ENCODE measurements at regions of chr2 and their contacts with region 1.

Region 1: DNA sequence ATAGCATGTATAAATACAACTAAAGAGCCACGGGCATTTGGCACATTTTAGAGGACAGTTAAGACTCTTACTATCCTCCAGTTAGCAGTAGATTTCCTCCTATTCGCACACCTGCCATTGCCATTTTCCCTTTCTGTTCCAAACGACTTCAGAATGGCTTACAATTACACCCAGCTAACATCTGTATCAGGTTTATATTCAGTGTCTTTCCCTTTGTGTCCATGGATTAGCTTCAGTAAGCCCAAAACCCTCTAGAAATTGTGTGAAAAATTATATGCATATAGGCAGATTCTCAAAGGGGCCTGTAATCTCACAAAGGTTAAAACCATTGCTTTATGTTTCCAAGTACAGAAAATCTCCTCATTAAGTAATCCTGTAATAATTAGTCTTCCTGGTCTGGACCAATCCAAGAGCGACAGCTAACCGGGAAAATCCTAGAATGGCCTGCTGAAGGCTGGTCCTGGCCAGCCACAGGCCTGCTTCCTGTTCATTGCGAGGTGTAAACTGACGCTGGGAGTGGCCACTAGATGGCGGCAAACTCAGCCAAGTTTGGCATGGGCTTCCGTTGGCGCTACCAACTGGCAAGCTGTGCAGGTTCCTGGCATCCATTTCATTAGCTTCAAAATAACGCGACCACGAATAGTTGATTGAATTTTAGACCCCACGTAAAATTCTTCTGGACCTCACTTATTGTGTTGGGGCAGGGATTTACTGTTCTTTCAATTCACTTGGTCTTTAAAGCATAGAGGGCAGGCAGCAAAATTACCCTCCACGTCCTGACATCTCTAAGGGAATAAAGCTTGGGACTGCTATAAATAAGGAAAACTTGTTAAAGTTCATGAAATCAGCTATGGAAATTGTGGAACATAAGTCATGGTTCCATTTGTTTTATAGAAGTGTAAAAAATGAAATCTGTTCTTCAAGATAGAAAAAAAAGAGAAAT is 17.1 kb downstream of the ARHGAP25 start:
- DNase-seq: peak; percentile 81 to 96 (median 93)
- ATAC-seq: peak; percentile 93
- H3K4me3 ChIP-seq: no peak overlapping the region
- H3K4me3 Mint-ChIP-seq: peak overlapping the region; percentile 61
- H3K27ac ChIP-seq: peak overlapping the region; percentile 16 to 70
- H3K27ac Mint-ChIP-seq: peak overlapping the region; percentile 87
- H3K4me1 ChIP-seq: peaks cover 70% of the 10 kb centered on the region
- H3K4me1 Mint-ChIP-seq: peaks cover 86% of the 10 kb centered on the region
- H3K27me3 ChIP-seq: no peaks in the 10 kb centered on the region
- H3K27me3 Mint-ChIP-seq: no peaks in the 10 kb centered on the region
- CTCF ChIP-seq: peak; percentile 84

Region 2: GRCh38 chr2:68715353-68716041 is 36.2 kb before region 1 on chr2:
- CTCF ChIA-PET with region 1: interaction called, 60 read pairs
- POLR2A ChIA-PET with region 1: interaction called, 5 read pairs
- intact Hi-C with region 1: loop called in 1 of 2 experiments (anchors 2 kb)
- DNase-seq: peak in 6 of 9 experiments; percentile 16 to 79 (median 60)
- ATAC-seq: peak; percentile 47
- H3K4me3 ChIP-seq: no peak overlapping the region
- H3K4me3 Mint-ChIP-seq: no peak overlapping the region
- H3K27ac ChIP-seq: no peak overlapping the region
- H3K27ac Mint-ChIP-seq: peak overlapping the region; percentile 11
- H3K4me1 ChIP-seq: peaks cover 53% of the 10 kb centered on the region
- H3K4me1 Mint-ChIP-seq: peaks cover 62% of the 10 kb centered on the region
- H3K27me3 ChIP-seq: peaks cover 0 to 3% of the 10 kb centered on the region in 2 experiments
- H3K27me3 Mint-ChIP-seq: no peaks in the 10 kb centered on the region
- CTCF ChIP-seq: no peak

Region 3: GRCh38 chr2:68734688-68735525 is 16.8 kb before region 1 on chr2 and contains the start of gene ARHGAP25:
- CTCF ChIA-PET with region 1: interaction called, 113 read pairs
- POLR2A ChIA-PET with region 1: interaction called, 22 read pairs
- intact Hi-C with region 1: loop called in 1 of 2 experiments (anchors 1 kb)
- DNase-seq: peak in 7 of 9 experiments; percentile 25 to 83 (median 61)
- ATAC-seq: peak; percentile 65
- H3K4me3 ChIP-seq: peak within 1 kb of the TSS; percentile 61 to 84
- H3K4me3 Mint-ChIP-seq: no peak within 1 kb of the TSS
- H3K27ac ChIP-seq: peak within 1 kb of the TSS; percentile 62 to 81
- H3K27ac Mint-ChIP-seq: no peak within 1 kb of the TSS
- H3K4me1 ChIP-seq: peaks cover 41% of the 10 kb centered on the region
- H3K4me1 Mint-ChIP-seq: peaks cover 38% of the 10 kb centered on the region
- H3K27me3 ChIP-seq: no peaks in the 10 kb centered on the region
- H3K27me3 Mint-ChIP-seq: no peaks in the 10 kb centered on the region
- CTCF ChIP-seq: no peak
- total RNA-seq, gene ARHGAP25: 35.8 to 36.7 TPM

Region 4: GRCh38 chr2:68784188-68784587 is 32.5 kb after region 1 on chr2:
- CTCF ChIA-PET with region 1: interaction called, 63 read pairs
- POLR2A ChIA-PET with region 1: interaction called, 9 read pairs
- intact Hi-C with region 1: no loop called
- DNase-seq: no peak
- ATAC-seq: no peak
- H3K4me3 ChIP-seq: no peak overlapping the region
- H3K4me3 Mint-ChIP-seq: peak overlapping the region; percentile 3
- H3K27ac ChIP-seq: peak overlapping the region in 1 of 2 experiments; percentile 61
- H3K27ac Mint-ChIP-seq: peak overlapping the region; percentile 56
- H3K4me1 ChIP-seq: peaks cover 60% of the 10 kb centered on the region
- H3K4me1 Mint-ChIP-seq: peaks cover 34% of the 10 kb centered on the region
- H3K27me3 ChIP-seq: no peaks in the 10 kb centered on the region
- H3K27me3 Mint-ChIP-seq: no peaks in the 10 kb centered on the region
- CTCF ChIP-seq: no peak

Region 5: GRCh38 chr2:68807821-68808266 is 56.2 kb after region 1 on chr2:
- CTCF ChIA-PET with region 1: interaction called, 22 read pairs
- POLR2A ChIA-PET with region 1: interaction called, 3 read pairs
- intact Hi-C with region 1: loop called in 1 of 2 experiments (anchors 2 kb)
- DNase-seq: peak in 3 of 9 experiments; percentile 22 to 63 (median 57)
- ATAC-seq: peak; percentile 49
- H3K4me3 ChIP-seq: no peak overlapping the region
- H3K4me3 Mint-ChIP-seq: no peak overlapping the region
- H3K27ac ChIP-seq: peak overlapping the region in 1 of 2 experiments; percentile 39
- H3K27ac Mint-ChIP-seq: peak overlapping the region; percentile 87
- H3K4me1 ChIP-seq: peaks cover 28% of the 10 kb centered on the region
- H3K4me1 Mint-ChIP-seq: peaks cover 59% of the 10 kb centered on the region
- H3K27me3 ChIP-seq: no peaks in the 10 kb centered on the region
- H3K27me3 Mint-ChIP-seq: no peaks in the 10 kb centered on the region
- CTCF ChIP-seq: no peak

Region 6: DNA sequence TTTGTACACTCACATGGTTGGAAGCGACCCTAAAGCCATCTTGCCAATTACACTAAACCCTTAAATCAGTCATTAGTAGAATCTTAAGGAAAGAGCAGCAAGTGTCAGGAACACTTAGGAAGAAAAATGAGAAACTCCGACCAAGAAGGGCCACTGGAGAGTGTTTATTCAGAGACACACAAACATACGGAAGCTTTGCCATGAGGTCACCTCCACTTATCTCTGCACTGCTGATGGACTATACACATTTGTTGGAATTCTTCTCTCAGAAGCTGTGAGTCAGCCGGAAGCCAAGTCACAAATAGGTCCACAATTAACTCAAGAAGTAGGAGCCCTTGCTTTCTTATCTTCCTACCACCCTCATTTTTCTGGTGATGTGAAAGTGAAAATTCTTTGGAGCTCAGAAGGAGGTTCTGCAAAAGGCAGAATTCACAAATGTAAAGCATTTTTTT is 97.9 kb after region 1 on chr2:
- CTCF ChIA-PET with region 1: interaction called, 14 read pairs
- POLR2A ChIA-PET with region 1: no interaction called
- intact Hi-C with region 1: no loop called
- DNase-seq: no peak
- ATAC-seq: no peak
- H3K4me3 ChIP-seq: no peak overlapping the region
- H3K4me3 Mint-ChIP-seq: no peak overlapping the region
- H3K27ac ChIP-seq: no peak overlapping the region
- H3K27ac Mint-ChIP-seq: no peak overlapping the region
- H3K4me1 ChIP-seq: no peaks in the 10 kb centered on the region
- H3K4me1 Mint-ChIP-seq: no peaks in the 10 kb centered on the region
- H3K27me3 ChIP-seq: no peaks in the 10 kb centered on the region
- H3K27me3 Mint-ChIP-seq: peaks cover 8% of the 10 kb centered on the region
- CTCF ChIP-seq: no peak

Region 7: GRCh38 chr2:69225933-69226332 is 474.3 kb after region 1 on chr2:
- CTCF ChIA-PET with region 1: no interaction called
- POLR2A ChIA-PET with region 1: no interaction called
- intact Hi-C with region 1: no loop called
- DNase-seq: no peak
- ATAC-seq: no peak
- H3K4me3 ChIP-seq: no peak overlapping the region
- H3K4me3 Mint-ChIP-seq: no peak overlapping the region
- H3K27ac ChIP-seq: no peak overlapping the region
- H3K27ac Mint-ChIP-seq: no peak overlapping the region
- H3K4me1 ChIP-seq: no peaks in the 10 kb centered on the region
- H3K4me1 Mint-ChIP-seq: no peaks in the 10 kb centered on the region
- H3K27me3 ChIP-seq: peaks cover 0 to 2% of the 10 kb centered on the region in 2 experiments
- H3K27me3 Mint-ChIP-seq: peaks cover 23% of the 10 kb centered on the region
- CTCF ChIP-seq: no peak

Region 8: DNA sequence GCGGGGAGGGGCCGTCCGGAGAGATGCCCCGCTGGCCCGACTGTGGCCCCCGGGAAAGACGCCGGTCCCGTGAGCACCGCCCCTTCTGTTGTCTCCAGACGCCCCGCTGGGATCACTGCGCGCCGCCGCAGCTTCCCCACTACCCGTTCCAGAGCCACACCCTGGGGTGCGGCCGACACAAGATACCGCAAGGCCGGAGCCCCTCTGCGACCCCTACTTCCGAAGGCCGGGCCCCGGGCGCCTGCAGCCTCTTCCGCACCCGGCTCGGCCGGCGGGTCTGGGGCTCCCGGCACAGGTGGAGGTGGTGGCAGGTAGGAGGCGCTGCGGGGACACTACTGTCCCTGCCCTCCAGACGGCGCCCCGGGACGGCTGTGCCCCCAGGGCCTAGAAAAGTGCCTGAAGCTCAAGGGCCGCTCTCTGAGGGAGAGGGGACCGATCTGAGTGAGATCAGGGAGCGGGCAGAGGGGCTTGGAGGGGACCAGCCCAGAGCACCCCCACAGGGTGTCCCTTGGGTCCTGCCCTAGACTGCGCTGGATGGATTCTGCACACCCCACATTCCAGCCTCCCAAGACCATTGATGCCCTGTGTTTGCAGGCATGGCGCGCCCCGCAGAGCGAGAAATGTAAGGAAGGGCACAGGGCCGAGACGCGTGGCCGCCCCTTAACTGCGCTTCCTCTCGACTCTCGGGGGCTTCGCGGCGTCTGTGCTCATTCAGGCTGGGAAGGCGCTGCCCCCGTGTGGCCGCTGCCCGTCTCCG is 555.3 kb after region 1 on chr2:
- CTCF ChIA-PET with region 1: no interaction called
- POLR2A ChIA-PET with region 1: no interaction called
- intact Hi-C with region 1: loop called in 1 of 2 experiments (anchors 5 kb)
- DNase-seq: peak; percentile 36 to 81 (median 68)
- ATAC-seq: peak; percentile 89
- H3K4me3 ChIP-seq: peak overlapping the region; percentile 49 to 58
- H3K4me3 Mint-ChIP-seq: peak overlapping the region; percentile 79
- H3K27ac ChIP-seq: no peak overlapping the region
- H3K27ac Mint-ChIP-seq: no peak overlapping the region
- H3K4me1 ChIP-seq: peaks cover 13% of the 10 kb centered on the region
- H3K4me1 Mint-ChIP-seq: peaks cover 21% of the 10 kb centered on the region
- H3K27me3 ChIP-seq: peaks cover 4 to 15% of the 10 kb centered on the region in 2 experiments
- H3K27me3 Mint-ChIP-seq: peaks cover 22% of the 10 kb centered on the region
- CTCF ChIP-seq: peak; percentile 78